Common myeloid progenitor, CD34-positive (primary cell): ENCODE measurements at regions of chr2 and their contacts with region 1.

Region 1: DNA sequence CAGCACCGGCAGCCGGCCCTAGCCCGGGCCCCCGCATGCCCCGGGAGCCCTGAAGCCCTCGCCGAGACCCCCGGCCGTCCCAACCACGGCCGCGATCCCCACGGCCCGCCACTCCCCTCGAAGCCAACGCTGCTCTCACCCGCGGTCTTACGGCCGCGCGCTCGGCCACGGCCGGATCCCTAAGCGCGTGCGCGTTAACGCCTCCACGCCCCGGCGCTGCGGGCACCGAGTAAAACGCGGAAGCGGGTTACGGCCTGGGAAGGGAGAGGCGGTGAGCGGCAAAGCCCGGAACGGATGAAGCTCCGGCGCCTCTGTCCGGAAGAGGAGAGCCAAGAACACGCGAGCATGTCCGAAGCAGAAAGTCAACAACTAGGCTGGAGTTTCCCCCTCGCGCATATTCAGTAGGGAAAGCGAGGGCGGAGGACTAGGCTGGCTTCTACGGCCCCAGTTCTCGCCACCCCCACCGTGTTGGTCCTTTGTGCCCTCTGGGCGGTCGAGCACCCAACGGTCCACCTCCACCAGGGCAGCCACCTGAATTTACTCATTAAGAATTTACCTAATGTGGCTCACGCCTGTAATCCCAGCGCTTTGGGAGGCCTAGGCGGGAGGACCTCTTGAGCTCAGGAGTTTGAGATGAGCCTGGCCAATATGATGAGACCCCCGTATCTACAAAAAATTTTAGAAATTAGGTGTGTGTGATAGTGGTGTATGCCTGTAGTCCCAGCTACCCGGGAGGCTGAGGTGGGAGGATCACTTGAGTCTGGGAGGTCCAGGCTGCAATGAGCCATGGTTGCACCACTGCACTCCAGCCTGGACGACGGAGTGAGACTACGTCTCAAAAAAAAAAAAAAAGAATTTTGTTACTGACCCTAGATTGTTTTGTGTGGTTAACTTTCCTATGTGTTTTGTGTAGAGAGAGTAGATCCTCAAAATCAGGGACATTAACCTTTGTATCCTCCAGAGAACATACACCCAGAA is at the start of gene KANSL3:
- DNase-seq: peak; percentile 92 to 96 (median 96)
- H3K4me3 ChIP-seq: peak within 1 kb of the TSS; percentile 55 to 95 (median 88)
- H3K27ac ChIP-seq: peak within 1 kb of the TSS; percentile 46 to 87
- H3K4me1 ChIP-seq: peaks cover 6 to 28% (median 19%) of the 10 kb centered on the region in 4 experiments
- H3K27me3 ChIP-seq: no peaks in the 10 kb centered on the region

Region 2: DNA sequence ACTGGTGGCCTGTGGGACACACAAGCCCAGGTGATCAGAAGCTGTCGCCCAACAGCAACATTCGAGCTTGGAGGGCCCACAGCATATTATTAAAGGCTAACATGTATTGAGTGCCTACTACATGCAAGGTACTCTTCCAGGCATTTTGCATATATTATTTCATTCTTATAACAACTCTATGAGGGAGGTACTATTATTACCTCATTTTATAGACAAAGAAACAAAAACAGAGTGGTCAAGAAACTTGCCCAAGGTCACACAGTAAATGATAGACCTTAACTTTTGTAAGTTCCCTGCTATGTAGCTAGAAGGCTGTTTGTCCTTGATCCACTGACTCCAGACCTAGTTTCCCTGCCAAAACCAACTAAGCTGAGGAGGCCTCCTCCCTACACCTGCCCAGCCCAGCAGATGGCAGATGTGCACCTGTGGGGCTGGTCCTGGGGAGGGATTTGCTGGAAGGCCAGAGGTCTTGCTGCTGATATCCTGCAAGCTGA is 36.1 kb before region 1 on chr2:
- CTCF ChIA-PET with region 1: interaction called, 10 read pairs
- POLR2A ChIA-PET with region 1: no interaction called
- DNase-seq: peak in 2 of 3 donors; percentile 13 to 17
- H3K4me3 ChIP-seq: no peak overlapping the region
- H3K27ac ChIP-seq: peak overlapping the region in 1 of 2 experiments; percentile 28
- H3K4me1 ChIP-seq: peaks cover 0 to 10% (median 9%) of the 10 kb centered on the region in 4 experiments
- H3K27me3 ChIP-seq: no peaks in the 10 kb centered on the region